Cardiac septum (tissue), 1 donor: ENCODE measurements at regions of chr21 and their contacts with region 1.

Region 1: GRCh38 chr21:34202553-34203372 is 129.4 kb downstream of the MRPS6 start:
- DNase-seq: no peak

Region 2: DNA sequence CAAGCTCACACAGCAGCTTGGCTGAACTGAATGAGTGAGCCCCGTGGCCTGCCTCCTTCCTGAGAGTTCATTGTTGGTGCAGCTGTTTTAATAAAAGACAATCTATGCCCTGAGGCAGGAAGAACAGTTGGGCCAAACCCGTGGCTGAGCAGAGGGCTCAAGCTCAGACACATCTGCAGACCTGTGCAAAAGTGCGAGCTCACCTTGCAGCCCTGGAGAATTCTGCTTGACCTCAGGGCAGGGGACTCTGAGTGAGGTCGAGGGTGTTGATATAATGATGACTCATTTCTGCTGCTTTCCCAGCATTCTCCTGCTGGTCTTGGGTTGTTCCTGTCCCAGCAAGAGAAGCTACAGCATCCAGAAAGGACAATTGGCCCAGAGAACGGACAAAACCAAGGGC is 348.2 kb before region 1 on chr21:
- intact Hi-C with region 1: no loop called
- DNase-seq: no peak

Region 3: DNA sequence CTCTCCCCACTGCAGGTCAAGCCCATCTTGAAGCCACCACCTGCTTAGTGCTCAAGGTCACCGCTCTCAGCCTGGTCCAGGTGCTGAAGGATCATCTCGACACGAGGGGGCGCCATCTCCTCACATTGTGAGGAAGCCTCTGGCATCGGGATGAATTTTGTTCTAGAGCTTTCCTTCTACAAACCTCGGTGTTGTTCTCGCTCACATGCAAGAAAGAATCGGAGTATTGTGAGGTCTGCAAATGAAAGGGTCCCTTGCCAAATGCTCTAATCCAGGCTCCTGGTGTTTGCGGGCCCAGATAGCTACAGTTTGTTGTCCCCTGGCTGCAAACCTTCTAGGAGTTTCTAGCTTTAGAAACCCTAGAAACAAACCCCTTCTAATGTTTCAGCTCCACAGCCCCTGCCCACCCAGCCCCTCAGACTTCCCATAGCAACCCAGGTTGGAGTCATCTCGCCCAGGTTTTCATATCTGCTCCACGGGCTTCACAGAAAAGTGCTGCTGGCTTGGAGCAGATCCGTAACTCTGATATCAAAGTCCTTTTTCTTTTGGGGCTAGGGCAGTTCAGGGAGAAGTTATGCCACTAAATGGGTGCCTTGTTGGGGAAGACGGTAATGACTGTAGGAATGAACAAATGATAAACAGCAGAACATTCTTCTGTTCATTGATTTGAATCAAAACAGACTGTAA is 278.5 kb before region 1 on chr21:
- intact Hi-C with region 1: loop called (anchors 5 kb)
- DNase-seq: peak; percentile 93

Region 4: DNA sequence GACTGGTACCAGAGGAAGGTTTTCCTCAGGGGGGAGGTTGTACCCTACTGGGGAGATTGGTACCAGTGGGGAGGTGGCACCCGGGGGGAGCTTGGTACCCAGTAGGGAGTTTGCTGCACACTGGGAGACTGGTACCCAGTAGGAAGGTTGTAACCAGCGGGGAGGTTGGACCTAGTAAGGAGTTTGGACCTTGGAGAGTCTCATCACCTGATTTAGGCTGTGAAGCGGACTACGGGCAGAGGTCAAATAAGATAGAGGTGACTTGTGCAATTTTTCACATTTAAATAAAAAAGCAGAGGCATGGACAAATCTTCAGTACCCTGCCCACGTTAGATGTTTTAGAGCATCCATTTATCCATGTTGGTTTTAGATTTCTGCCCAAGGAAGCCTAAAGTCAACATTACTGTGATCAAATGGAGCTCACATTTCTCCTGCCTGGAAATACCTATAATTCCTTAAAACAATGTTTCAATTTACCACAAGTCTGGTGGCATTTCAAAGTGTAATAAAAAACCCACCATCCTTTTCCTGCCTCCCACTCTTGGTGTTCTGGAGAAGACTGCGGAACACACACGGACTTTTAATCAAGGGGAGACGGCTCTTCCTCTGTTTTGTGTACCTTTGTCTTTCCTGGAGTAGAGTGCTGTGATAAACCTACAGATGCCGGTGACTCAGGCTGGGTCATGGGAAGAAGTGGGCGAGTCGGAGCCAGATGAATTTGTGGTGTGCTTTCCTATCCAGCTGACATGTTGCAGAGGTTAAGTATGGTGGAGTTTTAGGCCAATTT is 165.6 kb before region 1 on chr21:
- intact Hi-C with region 1: no loop called
- DNase-seq: no peak

Region 5: DNA sequence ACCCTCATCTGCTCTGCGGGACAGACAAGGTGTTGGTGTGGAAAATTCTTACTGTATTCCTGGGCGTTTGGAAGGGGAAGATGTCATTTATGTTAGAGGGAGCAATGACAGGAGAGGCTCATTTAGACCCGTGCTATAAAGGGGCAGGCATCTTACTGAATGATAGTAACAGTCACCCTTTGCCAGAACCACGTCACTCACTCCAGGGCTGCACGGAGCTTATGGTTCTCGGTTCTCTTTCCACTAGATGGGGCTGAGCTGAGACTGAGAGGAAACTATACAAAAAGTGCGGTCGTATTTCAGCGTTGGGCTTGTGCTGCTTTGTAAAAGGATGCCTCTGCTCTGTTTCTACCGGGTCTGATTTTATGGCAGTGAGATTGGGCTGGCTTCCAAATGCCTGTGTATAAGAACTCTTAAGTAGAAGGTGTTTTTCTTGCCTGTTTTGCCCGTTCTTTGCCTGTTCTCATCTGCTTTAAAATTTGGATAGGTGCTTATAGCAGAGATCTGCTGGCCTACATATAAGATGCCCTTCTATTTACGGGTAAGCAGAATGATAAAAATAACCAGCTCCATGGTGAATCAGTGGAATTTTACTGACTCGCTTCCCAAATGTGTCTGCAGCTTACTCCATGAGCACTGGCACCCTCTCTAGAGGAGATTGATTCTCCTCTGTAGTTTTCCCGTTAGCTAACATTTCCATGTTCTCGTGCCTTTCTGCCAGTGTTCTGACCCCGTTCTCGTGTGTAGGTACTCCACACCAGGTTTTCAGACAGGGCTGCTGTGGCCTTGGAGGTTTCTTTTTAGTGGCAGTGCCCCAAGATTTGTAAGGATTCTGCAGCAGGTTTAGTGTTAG is 73.5 kb before region 1 on chr21:
- intact Hi-C with region 1: loop called (anchors 5 kb)
- DNase-seq: no peak

Region 6: GRCh38 chr21:34313116-34313515 is 110.4 kb after region 1 on chr21:
- intact Hi-C with region 1: no loop called
- DNase-seq: no peak

Region 7: GRCh38 chr21:34351786-34352241 is 149.1 kb after region 1 on chr21:
- intact Hi-C with region 1: loop called (anchors 2 kb)
- DNase-seq: no peak